H1 (cell line): ENCODE measurements at regions of chr10 and their contacts with region 1.

Region 1: DNA sequence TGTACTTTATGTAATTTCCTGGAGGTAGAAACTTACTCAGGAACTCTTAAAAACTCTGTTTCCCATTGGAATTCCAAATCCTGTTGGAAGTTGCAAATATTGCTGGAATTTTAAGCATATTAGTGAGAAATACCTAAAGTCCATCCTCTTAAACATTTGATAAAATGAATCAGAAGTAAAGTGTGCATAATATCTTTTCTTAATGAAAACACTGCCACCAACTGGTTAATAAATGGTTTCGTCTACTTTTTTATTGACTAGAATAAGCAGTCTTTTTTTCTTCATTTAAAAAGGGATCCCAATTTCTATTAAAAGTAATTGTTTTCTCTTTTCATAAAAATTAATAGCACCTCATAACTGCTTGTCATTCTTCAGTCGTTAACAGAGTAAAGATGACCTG is 28.3 kb downstream of the NPS start:
- DNase-seq: no peak
- H3K4me3 ChIP-seq: no peak overlapping the region
- H3K27ac ChIP-seq: no peak overlapping the region
- H3K4me1 ChIP-seq: no peaks in the 10 kb centered on the region
- H3K27me3 ChIP-seq: no peaks in the 10 kb centered on the region
- CTCF ChIP-seq: no peak
- EP300 ChIP-seq: no peak
- POLR2A ChIP-seq: no peak
- RAD21 ChIP-seq: peak in 1 of 2 experiments; percentile 5; a peak in 1 of 4 replicates

Region 2: GRCh38 chr10:127563718-127564553 is 13.4 kb before region 1 on chr10:
- CTCF ChIA-PET with region 1: interaction called, 14 read pairs
- POLR2A ChIA-PET with region 1: no interaction called
- DNase-seq: peak in 1 of 2 experiments; percentile 87
- H3K4me3 ChIP-seq: no peak overlapping the region
- H3K27ac ChIP-seq: no peak overlapping the region
- H3K4me1 ChIP-seq: no peaks in the 10 kb centered on the region
- H3K27me3 ChIP-seq: no peaks in the 10 kb centered on the region
- CTCF ChIP-seq: peak; percentile 73 to 89 (median 83)
- EP300 ChIP-seq: no peak
- POLR2A ChIP-seq: no peak
- RAD21 ChIP-seq: peak; percentile 39 to 60; a peak in 3 of 4 replicates